ENCODE measurements at regions of chr15 and their contacts with region 1.

Region 1: DNA sequence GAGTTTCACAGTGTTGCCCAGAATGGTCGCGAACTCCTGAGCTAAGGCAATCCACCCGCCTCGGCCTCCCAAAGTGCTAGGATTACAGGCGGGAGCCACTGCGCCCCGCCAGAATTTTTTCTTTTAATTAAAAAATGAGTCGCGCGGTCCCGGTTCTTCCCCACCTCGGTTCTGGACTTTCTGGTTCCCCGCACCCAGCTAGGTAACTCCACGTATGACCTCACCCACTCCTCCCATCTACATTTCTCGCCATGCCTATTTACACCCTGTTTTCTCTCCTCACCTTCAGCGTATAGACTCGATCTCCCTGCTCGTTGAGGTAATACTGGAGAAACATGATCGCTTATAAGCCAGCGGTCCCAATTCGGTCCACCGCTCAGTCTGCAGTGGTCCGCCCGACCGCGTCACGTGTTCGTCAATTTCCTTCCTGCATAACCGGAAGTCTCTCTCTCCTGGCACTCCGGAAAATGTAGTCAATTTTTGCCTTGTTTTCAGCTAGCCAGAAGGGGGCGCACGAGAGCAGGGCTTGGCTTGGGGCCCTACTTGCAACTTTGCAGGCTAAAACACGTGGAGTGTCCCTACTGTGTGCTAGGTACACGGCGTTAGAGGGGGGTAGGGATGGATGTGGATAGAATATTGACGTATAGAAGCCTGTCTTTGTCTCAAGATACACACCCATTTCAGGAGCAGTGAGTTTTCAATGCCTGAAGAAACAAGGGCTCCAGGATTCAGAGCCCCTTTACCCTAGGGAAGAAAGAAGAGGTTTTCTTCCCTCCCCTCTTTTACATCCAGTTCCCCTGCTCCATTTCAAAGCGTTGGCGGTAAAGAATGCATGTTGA is at the starts of genes NOP10 and NUTM1:
- ATAC-seq: peak; percentile 85 to 93 (median 90)
- H3K4me3 ChIP-seq: peak within 1 kb of the TSS; percentile 42 to 61 (median 58)
- H3K27ac ChIP-seq: peak within 1 kb of the TSS; percentile 73 to 87
- H3K4me1 ChIP-seq: peaks cover 0 to 8% of the 10 kb centered on the region in 2 donors
- total RNA-seq, gene NOP10: 137 to 420 (median 205) TPM
- total RNA-seq, gene NUTM1: 0.07 to 0.52 (median 0.13) TPM

Region 2: DNA sequence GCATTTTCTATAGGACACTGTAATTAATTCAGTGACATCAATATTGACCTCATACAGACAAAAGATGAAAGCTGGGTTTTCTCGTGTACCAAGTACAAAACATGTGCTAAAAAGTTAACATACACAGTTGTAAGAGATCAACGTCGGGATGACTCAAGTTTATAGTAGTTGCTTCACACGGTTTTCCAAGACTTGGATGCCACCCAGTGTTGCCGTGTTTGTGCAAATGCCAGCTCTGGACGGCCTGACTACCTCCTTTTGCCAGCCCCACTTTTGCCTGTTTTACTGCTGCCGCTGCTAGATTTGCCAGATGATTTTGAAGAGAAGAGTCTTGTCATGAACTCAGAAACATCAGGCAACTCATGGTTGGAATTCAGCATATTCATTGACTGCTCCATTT is 258.9 kb before region 1 on chr15:
- in situ Hi-C with region 1: loop called in 1 of 9 experiments (anchors 25 kb)
- ATAC-seq: peak in 2 of 8 experiments; percentile 25 to 79
- H3K4me3 ChIP-seq: no peak overlapping the region
- H3K27ac ChIP-seq: no peak overlapping the region
- H3K4me1 ChIP-seq: no peaks in the 10 kb centered on the region

Region 3: DNA sequence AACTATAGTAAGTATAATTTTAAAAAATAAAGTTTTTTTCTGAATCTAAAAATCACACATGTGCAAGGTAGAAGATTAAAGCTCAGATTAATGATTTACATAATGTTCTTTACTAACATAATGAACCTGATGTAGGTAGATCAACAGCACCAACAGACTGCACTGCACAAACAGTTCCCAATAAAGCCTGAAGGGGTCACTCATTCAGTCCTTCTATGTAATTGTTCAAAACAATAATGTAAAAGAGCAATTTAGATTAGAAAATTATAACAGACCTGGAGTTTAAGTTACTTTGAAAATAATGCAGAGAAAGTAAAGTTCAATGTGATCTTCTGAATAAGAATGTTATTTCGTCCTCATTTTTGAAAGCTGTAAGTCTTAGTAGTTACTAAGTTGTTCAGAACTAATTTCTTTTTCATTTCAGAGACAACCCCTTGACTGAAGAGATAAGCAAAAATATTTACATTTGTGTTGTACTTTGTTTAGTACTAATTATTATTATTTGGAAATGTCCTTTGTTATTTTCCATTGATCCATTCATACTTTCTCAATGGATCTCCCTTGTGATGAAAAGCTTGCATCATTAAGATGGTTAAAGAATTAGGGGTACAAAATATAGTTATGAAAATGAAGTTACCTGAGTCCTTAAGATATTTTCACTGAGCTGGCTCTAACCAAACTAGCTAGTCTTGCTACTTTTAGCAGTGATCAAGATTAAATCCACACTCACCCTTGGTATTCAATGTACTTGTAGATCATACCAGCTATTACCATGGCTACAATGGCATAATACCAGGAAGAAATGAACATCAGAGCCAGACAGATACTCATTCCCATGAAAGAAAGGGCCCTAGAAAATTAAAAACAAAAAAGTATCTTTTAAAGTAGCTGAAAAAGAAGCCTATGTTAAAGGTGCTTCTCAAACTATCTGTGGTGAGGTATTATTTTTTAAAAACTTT is 101.3 kb before region 1 on chr15:
- in situ Hi-C with region 1: loop called in 2 of 9 experiments (anchors 25 kb)
- ATAC-seq: peak in 2 of 8 experiments; percentile 6 to 9
- H3K4me3 ChIP-seq: no peak overlapping the region
- H3K27ac ChIP-seq: no peak overlapping the region
- H3K4me1 ChIP-seq: no peaks in the 10 kb centered on the region

Measured in motor neuron (in vitro differentiated cells).